ENCODE measurements at regions of chr12 and their contacts with region 1.

Region 1: GRCh38 chr12:109093022-109093918 is at the start of gene ALKBH2:
- DNase-seq: peak; percentile 84
- H3K4me3 ChIP-seq: peak within 1 kb of the TSS; percentile 59 to 74 (median 65)
- H3K27ac ChIP-seq: peak within 1 kb of the TSS; percentile 70
- H3K4me1 ChIP-seq: peaks cover 13% of the 10 kb centered on the region
- H3K27me3 ChIP-seq: no peaks in the 10 kb centered on the region
- CTCF ChIP-seq: peak; percentile 96 to 98
- total RNA-seq, gene ALKBH2: 15.2 to 23.9 TPM

Region 2: DNA sequence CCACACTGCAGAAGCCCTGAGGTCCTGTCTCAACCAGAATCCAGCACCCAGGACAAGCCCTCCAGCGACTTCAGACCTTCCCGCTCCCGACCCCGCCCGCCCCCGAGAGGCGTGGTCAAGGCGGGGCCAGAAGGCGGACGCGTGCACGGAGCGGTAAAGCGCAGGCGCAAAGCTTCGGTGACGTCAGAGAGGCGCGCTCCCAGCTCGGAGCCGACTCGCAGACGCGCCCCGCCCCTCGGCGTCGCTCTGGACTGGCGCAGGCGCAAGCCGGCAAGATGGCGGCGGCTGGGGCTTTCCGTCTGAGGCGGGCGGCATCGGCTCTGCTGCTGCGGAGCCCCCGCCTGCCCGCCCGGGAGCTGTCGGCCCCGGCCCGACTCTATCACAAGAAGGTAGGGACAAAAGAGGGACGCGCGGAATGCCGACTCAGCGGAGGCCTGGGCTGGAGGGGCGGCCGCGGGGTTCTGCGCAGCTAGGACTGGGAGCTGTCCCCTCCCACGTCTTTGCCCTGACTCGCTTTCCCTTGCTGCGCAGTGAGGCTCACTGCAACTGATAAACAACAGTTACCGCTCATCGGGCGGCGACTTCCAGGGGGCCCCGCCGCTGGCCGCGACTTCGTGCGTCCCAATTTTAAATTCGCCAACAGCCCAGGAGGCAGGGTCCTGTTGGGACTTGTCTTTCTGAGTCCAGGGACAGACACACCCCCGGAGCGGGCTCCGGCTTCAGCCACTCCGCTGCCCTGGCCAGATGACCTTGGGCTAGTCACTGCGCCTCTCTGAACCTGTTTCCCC is 530.7 kb before region 1 on chr12 and contains the start of gene ISCU:
- CTCF ChIA-PET with region 1: interaction called, 3 read pairs
- dilution Hi-C with region 1: loop called (anchors 10 kb)
- in situ Hi-C with region 1: loop called in 1 of 2 experiments (anchors 25 kb)
- intact Hi-C with region 1: loop called (anchors 1 kb)
- DNase-seq: peak; percentile 96
- H3K4me3 ChIP-seq: peak within 1 kb of the TSS; percentile 88
- H3K27ac ChIP-seq: peak within 1 kb of the TSS; percentile 93
- H3K4me1 ChIP-seq: peaks cover 30% of the 10 kb centered on the region
- H3K27me3 ChIP-seq: no peaks in the 10 kb centered on the region
- CTCF ChIP-seq: no peak
- total RNA-seq, gene ISCU: 55.3 to 77.6 TPM

Region 3: DNA sequence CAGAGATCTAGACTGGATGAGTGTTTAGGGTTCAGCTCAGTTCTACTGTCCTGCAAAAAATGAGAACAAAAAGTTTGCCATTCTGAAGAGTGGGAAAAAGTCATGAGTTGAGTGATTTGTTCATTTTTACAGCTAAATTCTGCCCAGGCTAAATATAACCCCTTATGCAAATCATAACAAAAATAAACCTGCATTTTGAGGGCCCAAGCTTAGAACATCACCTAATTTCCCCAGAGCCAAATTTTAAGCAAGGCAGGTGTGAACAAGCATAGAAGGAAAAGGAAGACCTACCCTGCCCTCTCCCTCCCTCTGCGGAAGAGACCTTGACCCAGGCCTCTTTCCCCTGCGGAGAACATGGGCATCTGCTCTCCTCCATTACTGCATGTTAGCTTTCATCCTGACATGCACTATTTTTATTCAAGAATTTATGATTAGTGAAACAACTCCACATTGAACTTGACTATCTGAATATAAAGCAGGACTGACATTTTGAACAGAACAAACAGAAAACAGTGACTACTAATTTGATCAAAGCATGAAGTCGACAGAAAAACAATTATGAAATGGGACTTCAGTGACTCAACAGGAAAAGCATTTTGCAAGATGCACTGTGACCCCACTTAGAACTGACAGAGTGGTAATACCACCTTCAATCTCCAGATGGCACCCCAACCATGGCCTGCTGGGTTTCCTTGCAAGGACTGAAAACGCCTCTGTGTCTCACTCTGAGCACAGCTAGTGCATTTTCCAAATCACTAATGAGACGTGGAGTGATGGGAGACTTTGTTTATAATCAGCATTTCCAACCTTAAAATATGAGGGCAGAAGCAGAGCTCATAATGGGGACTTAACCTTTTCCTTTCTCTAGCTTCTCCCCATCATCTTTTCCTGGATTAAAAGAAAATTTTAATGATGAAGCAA is 428.7 kb before region 1 on chr12:
- CTCF ChIA-PET with region 1: no interaction called
- dilution Hi-C with region 1: no loop called
- in situ Hi-C with region 1: no loop called
- intact Hi-C with region 1: loop called (anchors 1 kb)
- DNase-seq: peak; percentile 90
- H3K4me3 ChIP-seq: no peak overlapping the region
- H3K27ac ChIP-seq: peak overlapping the region; percentile 75
- H3K4me1 ChIP-seq: peaks cover 21% of the 10 kb centered on the region
- H3K27me3 ChIP-seq: no peaks in the 10 kb centered on the region
- CTCF ChIP-seq: peak; percentile 97 to 98

Region 4: GRCh38 chr12:108803428-108804105 is 289.7 kb before region 1 on chr12:
- CTCF ChIA-PET with region 1: no interaction called
- dilution Hi-C with region 1: loop called (anchors 10 kb)
- in situ Hi-C with region 1: loop called in 1 of 2 experiments (anchors 5 kb)
- intact Hi-C with region 1: loop called (anchors 2 kb)
- DNase-seq: peak; percentile 68
- H3K4me3 ChIP-seq: no peak overlapping the region
- H3K27ac ChIP-seq: peak overlapping the region; percentile 67
- H3K4me1 ChIP-seq: peaks cover 36% of the 10 kb centered on the region
- H3K27me3 ChIP-seq: no peaks in the 10 kb centered on the region
- CTCF ChIP-seq: peak; percentile 97 to 98

Region 5: DNA sequence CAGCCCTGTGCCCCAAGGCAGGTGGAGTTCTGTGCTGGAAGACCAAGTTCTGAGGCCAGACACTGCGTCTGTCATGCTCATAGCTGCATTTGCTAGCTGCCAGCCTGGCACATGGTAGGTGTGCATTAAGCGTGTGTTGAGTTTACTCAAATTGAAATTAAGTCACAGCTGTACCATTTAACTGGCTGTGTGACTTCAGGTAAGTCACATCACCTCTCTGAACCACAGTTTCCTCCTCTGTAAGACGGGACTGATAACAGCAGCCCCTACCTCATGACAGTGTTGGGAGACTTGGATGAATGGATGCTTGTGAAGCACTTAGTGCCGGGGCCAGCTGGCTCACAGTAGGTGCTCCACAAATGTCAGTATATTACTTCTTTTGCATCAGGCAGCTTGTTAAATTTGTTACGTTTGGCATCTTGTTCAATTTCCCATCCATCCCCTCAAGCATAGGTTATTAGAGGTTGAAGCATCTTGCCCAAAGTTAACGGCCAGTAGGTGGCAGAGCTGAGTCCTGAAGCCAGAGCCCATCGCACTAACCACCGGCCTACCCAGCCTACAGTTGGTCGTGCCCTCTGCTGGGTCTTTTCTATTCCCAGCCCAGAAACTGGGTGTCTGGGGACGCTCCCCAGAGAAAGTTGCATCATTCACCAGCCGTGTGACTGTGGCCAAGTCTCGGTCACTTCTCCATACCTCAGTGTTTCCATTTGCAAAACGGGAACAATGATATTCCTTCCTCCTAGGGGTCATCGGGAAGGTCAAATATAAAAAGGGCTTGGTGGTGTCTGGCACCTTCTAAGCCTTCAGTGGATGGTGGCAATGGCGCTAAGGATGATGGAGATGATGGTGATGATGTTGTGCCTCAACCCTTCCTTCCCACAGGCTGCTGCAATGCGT is 208.9 kb before region 1 on chr12:
- CTCF ChIA-PET with region 1: no interaction called
- dilution Hi-C with region 1: no loop called
- in situ Hi-C with region 1: no loop called
- intact Hi-C with region 1: loop called (anchors 2 kb)
- DNase-seq: peak; percentile 14
- H3K4me3 ChIP-seq: no peak overlapping the region
- H3K27ac ChIP-seq: no peak overlapping the region
- H3K4me1 ChIP-seq: peaks cover 2% of the 10 kb centered on the region
- H3K27me3 ChIP-seq: no peaks in the 10 kb centered on the region
- CTCF ChIP-seq: peak; percentile 65 to 72

Region 6: DNA sequence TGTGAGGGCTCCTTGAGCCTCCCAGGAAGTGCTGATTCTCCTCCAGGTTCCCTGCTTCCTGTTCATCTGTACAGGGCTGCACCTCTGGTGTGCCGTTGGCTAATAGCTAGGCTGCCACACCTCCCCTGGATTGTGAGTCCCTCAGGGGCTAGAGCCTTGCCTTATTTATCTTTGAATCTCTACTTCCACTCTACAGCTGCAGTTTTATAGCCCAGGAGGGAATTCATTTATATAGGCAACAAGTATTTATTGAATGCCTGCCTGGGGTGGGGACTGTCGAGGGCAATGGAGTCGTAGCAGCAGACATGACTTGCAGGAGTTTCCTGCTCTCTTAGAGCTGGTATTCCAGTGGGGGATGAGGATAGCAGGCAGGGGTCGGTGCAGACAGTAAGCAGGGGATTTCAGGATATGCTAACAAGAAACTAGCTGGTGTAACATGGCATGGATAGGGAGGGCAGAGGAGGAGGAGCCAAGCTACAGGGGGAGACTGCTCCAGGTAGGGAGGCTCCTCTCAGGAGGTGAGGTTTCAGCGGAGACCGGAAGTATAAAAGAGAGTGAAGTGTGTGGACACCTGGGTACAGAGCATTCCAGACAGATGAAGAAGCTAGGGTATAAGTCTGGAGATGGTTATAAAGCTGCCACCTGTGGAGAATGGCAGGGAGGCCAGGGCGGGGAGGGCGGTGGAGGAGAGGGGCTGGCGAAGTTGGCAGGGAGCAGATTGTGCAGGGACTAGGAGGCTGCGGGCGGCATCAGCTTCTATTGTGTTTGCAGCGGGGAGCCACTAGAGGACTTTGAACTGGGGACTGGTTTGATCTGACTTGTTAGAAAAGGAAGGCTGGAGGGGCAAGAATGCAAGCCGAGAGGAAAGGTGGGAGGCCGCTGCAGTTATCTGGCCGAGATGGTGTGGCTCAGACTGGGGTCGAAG is 23.7 kb before region 1 on chr12:
- CTCF ChIA-PET with region 1: no interaction called
- dilution Hi-C with region 1: no loop called
- in situ Hi-C with region 1: no loop called
- intact Hi-C with region 1: no loop called
- DNase-seq: no peak
- H3K4me3 ChIP-seq: no peak overlapping the region
- H3K27ac ChIP-seq: no peak overlapping the region
- H3K4me1 ChIP-seq: no peaks in the 10 kb centered on the region
- H3K27me3 ChIP-seq: no peaks in the 10 kb centered on the region
- CTCF ChIP-seq: no peak

Region 7: DNA sequence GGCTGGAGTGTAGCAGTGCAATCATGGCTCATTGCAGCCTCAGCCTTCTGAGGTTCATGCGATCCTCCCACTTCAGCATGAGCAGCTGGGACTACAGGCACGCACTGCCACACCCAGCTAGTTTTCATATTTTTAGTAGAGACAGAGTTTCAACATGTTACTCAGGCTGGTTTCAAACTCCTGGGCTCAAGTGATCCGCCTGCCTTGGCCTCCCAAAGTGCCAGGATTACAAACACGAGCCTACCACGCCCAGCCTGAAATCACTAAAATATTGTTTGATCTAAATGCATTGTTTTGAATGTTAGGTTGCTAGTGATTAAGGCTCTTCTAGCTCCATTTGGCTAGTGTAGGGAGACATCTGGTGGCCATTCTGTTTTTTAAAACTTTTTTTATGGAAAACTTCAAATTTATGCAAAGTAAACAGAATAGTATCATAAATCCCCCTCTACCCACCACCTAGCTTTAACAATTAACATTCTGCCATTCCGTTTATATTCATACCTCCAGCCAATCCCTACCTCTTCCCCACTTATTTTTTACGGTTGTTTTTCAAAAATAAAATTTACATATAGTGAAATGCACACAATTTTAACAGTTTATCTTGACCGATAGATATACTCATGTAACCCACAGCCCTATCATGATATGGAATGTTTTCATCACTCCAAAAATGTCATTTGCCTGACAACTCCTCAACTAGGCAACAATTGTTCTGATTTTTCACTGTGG is 292.2 kb after region 1 on chr12:
- CTCF ChIA-PET with region 1: no interaction called
- dilution Hi-C with region 1: no loop called
- in situ Hi-C with region 1: no loop called
- intact Hi-C with region 1: loop called (anchors 5 kb)
- DNase-seq: peak; percentile 55
- H3K4me3 ChIP-seq: no peak overlapping the region
- H3K27ac ChIP-seq: no peak overlapping the region
- H3K4me1 ChIP-seq: no peaks in the 10 kb centered on the region
- H3K27me3 ChIP-seq: no peaks in the 10 kb centered on the region
- CTCF ChIP-seq: peak; percentile 18 to 56

Measured in mammary epithelial cell (primary cell).